Activated T-helper 1 cell treated with anti-CD3 and anti-CD28 coated beads, Interleukin-12 subunit alpha, Interleukin-12 subunit beta, Interleukin-2, Interleukin-4 antibody, amounts not matched to agents 30 ng/mL and 10 ng/mL and 1 ng/mL, durations not matched to agents 14 hours and 24 hours and 36 hours (primary cell): ENCODE measurements at regions of chr7 and their contacts with region 1.

Region 1: GRCh38 chr7:144127703-144128334 is 4.8 kb downstream of the OR2A14 start:
- DNase-seq: peak; percentile 72
- H3K4me3 Mint-ChIP-seq: no peak overlapping the region
- H3K27ac Mint-ChIP-seq: no peak overlapping the region
- H3K4me1 Mint-ChIP-seq: no peaks in the 10 kb centered on the region
- H3K27me3 Mint-ChIP-seq: no peaks in the 10 kb centered on the region

Region 2: DNA sequence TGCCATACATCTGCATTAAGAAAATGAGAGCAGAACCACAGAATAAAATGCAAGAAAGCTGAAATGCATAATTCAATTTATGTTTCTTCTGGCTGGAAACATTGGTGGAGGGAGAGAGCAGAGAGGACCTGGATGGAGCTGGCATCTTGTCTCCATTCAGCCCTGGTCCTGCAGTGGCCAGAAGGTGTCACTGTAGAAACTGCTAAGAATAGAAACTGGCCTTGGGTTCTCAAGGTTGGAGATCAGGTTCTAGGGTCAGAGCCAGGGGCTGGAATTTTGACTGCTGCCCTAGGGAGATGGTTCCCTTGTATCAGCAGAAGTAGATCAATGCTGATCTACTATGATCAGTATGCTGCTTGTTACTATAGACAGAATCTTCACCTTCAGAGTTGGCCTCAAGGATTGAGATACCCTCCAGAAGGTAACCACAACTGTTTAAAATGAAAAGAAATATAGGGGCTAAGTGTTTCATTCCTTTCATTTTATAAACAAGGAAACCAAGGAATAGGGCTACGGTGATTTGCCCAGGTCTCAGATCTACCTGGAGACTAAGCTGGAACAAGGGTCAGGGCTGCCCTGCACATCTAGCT is 637.0 kb before region 1 on chr7:
- intact Hi-C with region 1: loop called (anchors 1 kb)
- DNase-seq: no peak
- H3K4me3 Mint-ChIP-seq: no peak overlapping the region
- H3K27ac Mint-ChIP-seq: no peak overlapping the region
- H3K4me1 Mint-ChIP-seq: peaks cover 34% of the 10 kb centered on the region
- H3K27me3 Mint-ChIP-seq: peaks cover 2% of the 10 kb centered on the region

Region 3: GRCh38 chr7:144144426-144144825 is 16.6 kb after region 1 on chr7:
- intact Hi-C with region 1: no loop called
- DNase-seq: no peak
- H3K4me3 Mint-ChIP-seq: no peak overlapping the region
- H3K27ac Mint-ChIP-seq: no peak overlapping the region
- H3K4me1 Mint-ChIP-seq: no peaks in the 10 kb centered on the region
- H3K27me3 Mint-ChIP-seq: no peaks in the 10 kb centered on the region